Psoas muscle (tissue), 8 donors: ENCODE measurements at regions of chr9 and their contacts with region 1.

Region 1: GRCh38 chr9:94867281-94867841 is 140.9 kb downstream of the AOPEP start:
- DNase-seq: peak; percentile 56 to 70
- ATAC-seq: peak; percentile 73 to 79 (median 75)
- H3K4me3 ChIP-seq: peak overlapping the region; percentile 32
- H3K27ac ChIP-seq: peak overlapping the region; percentile 93
- H3K4me1 ChIP-seq: peaks cover 81% of the 10 kb centered on the region
- H3K27me3 ChIP-seq: no peaks in the 10 kb centered on the region
- CTCF ChIP-seq: no peak

Region 2: DNA sequence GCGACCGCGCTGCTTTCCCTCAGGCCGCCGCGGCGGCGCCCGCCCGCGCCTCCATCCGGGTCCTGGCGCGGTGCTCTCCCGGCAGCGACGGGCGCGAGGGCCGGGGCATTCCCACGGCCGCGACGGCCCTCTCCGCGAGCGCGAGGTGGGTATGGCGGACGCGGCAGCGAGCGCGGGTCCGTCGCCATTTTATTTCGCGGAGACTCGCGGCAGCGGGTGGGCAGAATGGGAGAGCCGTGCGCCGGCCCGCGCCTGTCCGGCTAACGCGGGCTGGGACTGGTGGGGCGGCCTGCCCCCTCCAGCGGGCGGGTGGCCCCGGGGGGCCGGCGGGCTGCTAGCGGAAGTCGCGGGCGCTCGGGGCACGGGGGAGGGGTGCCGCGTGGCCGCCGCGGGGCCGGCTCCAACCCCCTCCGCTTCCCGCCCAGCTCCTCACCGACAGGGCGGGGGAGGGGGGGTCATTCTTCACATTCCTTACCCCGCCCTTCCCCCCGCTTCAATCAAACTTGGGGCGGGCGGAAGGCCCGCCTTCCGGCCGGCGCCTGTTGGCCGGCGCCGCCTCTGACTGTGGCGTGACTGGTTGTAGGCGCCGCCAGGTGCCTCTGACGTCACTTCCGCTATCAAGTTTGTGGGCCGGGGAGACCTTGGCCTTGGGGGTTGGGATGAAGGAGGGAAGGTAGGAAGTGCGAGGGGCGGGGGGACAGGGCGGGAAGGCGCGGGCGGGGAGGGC is 701.0 kb before region 1 on chr9:
- intact Hi-C with region 1: no loop called
- DNase-seq: peak; percentile 97 to 99
- ATAC-seq: peak; percentile 77 to 85 (median 82)
- H3K4me3 ChIP-seq: peak overlapping the region; percentile 96
- H3K27ac ChIP-seq: peak overlapping the region; percentile 100
- H3K4me1 ChIP-seq: peaks cover 35% of the 10 kb centered on the region
- H3K27me3 ChIP-seq: no peaks in the 10 kb centered on the region
- CTCF ChIP-seq: peak; percentile 14

Region 3: DNA sequence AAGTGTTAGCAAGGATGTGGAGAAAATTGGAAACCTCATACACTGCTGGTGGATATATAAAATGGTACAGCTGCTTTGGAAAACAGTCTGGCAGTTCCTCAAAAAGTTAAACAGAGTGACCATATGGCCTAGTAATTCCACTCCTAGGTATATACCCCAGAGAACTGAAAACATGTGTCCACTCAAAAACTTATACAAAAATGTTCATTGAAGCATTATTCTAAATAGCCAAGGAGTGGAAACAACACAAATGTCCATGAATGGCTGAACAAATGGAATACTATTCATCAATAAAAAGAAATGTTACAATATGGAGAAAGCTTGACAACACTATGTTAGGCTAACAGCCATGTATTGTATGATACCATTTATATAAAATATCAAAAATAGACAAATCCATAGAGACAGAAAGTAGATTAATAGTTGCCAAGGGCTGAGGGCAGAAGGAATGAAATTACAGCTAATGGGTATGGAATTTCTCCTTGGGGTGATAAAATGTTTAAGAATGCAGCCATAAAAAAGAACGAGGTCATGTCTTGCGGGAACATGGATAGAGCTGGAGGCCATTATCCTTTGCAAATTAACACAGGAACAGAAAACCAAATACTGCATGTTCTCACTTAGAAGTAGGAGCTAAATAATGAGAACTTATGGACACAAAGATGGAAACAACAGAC is 194.4 kb before region 1 on chr9:
- intact Hi-C with region 1: no loop called
- DNase-seq: no peak
- ATAC-seq: no peak
- H3K4me3 ChIP-seq: no peak overlapping the region
- H3K27ac ChIP-seq: no peak overlapping the region
- H3K4me1 ChIP-seq: peaks cover 15% of the 10 kb centered on the region
- H3K27me3 ChIP-seq: no peaks in the 10 kb centered on the region
- CTCF ChIP-seq: no peak

Region 4: GRCh38 chr9:94783102-94783664 is 84.2 kb before region 1 on chr9:
- intact Hi-C with region 1: loop called in 1 of 2 experiments (anchors 5 kb)
- DNase-seq: peak; percentile 88 to 95
- ATAC-seq: peak; percentile 92 to 97 (median 94)
- H3K4me3 ChIP-seq: no peak overlapping the region
- H3K27ac ChIP-seq: peak overlapping the region; percentile 65
- H3K4me1 ChIP-seq: peaks cover 27% of the 10 kb centered on the region
- H3K27me3 ChIP-seq: no peaks in the 10 kb centered on the region
- CTCF ChIP-seq: peak; percentile 76

Region 5: DNA sequence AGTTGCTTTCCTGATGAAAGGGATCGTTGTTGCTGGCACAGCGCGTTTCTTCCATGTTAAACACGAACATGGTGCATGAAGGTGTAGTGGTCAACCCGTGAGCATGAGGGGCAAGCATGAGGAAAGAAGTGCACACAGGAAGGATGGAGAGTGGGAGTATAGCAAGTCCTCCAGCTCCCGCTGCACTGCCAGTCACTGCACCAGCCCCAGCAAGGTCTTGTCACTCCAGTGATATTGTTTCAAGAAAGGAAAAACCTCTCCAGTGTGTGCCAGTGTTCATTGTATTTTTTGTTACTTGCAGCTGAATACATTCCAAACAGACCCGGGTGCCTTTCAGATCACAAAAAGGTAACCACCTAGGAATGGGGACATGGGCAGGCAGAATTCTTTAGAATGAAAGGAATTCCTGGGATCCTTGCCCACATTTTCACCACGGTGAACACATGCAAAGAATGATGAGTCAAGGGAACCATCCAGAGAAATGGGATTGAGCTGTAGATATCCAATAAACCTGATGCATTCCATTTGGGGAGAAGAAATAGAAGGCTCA is 45.4 kb after region 1 on chr9:
- intact Hi-C with region 1: loop called (anchors 5 kb)
- DNase-seq: no peak
- ATAC-seq: peak in 2 of 4 donors; percentile 23 to 50
- H3K4me3 ChIP-seq: no peak overlapping the region
- H3K27ac ChIP-seq: peak overlapping the region; percentile 39
- H3K4me1 ChIP-seq: peaks cover 27% of the 10 kb centered on the region
- H3K27me3 ChIP-seq: no peaks in the 10 kb centered on the region
- CTCF ChIP-seq: no peak

Region 6: GRCh38 chr9:94945197-94946144 is 78.1 kb after region 1 on chr9:
- intact Hi-C with region 1: loop called in 1 of 2 experiments (anchors 5 kb)
- DNase-seq: peak; percentile 60 to 68
- ATAC-seq: peak; percentile 81 to 85 (median 84)
- H3K4me3 ChIP-seq: peak overlapping the region; percentile 40
- H3K27ac ChIP-seq: peak overlapping the region; percentile 77
- H3K4me1 ChIP-seq: peaks cover 66% of the 10 kb centered on the region
- H3K27me3 ChIP-seq: no peaks in the 10 kb centered on the region
- CTCF ChIP-seq: no peak